CD8-positive, alpha-beta T cell (primary cell): ENCODE measurements at regions of chr3 and their contacts with region 1.

Region 1: DNA sequence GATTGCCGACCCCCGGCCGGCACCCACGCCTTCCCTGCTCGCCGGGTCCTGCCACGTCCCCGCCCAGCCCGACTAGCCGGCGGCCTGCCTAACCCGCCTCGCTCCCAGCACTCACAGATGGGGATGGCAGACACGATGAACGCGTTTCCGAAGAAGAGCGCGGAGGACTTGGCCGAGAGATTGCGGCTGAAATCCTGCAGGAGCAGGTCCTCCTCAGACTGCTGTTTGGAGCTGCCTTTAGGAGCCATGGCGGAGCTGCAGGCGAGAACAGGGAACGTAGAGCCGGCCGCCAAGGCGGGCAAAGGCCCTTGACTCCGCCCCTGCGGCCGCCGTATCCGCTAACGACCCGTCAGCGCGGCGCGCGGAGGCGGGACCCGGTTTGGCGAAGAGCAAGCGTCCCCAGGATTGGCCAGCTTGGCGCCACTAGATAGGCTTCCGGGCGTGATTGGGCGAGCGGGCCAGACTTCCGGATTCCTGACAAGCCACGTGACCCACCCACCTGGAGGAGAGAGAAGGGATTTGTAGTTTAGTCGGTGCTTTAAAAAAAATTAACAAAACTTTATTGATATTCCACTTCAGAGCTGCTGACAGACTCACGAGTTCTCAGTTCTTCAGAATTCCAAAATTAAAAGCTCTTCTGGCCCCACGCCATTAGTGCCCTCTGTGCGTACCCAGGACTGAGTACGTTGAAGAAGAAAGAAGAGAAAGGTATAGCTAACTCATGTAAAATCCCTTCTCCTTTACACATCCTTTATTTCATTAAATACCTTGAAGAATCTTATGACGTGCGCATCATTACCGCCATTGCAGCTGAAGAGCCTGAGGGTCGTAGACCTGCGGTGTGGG is at the start of gene SSR3:
- DNase-seq: peak; percentile 98 to 99 (median 98)
- ATAC-seq: peak; percentile 98
- H3K4me3 ChIP-seq: peak within 1 kb of the TSS; percentile 87 to 98
- H3K4me3 Mint-ChIP-seq: peak within 1 kb of the TSS; percentile 97
- H3K27ac ChIP-seq: peak within 1 kb of the TSS; percentile 76 to 89
- H3K27ac Mint-ChIP-seq: peak within 1 kb of the TSS; percentile 94
- H3K4me1 ChIP-seq: peaks cover 20% of the 10 kb centered on the region
- H3K4me1 Mint-ChIP-seq: peaks cover 49% of the 10 kb centered on the region
- H3K27me3 ChIP-seq: no peaks in the 10 kb centered on the region
- H3K27me3 Mint-ChIP-seq: no peaks in the 10 kb centered on the region
- CTCF ChIP-seq: peak; percentile 27
- total RNA-seq, gene SSR3: 81.4 to 82.5 TPM

Region 2: DNA sequence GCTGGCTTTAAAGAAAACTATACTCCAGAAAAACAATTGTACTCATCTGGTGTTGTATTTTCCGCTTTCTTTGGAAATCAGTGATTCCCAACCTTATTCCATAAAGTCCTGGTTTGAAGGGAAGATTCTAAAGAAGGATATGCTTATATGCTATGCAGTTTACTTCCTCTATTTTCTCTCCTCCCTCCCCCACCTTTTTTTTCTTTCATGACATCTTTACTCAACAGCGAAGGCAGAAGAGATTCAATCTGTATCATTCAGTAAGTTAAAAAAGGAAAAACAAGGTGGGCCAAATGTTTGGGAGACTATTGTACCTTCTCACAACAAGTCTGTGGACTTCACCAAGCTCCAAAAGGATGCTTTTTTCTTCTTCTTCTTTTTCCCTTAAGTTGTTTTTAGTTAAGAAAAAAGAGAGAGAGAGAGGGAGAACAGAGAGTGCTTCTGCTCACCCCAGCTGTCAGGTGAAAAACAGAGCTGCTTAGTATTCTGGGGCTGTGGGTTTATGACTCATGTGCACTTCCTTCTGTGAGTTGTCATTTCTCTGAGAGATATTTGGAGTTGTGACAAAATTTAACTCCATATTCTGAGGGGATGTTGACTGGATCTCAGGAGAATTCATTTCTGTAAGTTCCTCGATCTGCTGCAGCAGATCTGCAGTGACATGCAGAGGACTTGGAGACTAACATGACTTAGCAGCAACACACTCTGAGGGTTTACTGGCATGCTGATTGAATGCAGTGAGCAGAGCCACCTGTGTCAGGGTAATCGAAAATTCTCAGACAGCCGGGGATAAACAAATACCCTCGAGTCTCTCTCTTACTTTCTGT is 70.9 kb before region 1 on chr3:
- CTCF ChIA-PET with region 1: interaction called, 3 read pairs
- POLR2A ChIA-PET with region 1: interaction called, 6 read pairs
- intact Hi-C with region 1: loop called in 1 of 2 experiments (anchors 2 kb)
- DNase-seq: peak in 8 of 9 experiments; percentile 16 to 81 (median 58)
- ATAC-seq: peak; percentile 85
- H3K4me3 ChIP-seq: peak overlapping the region; percentile 21 to 36
- H3K4me3 Mint-ChIP-seq: peak overlapping the region; percentile 74
- H3K27ac ChIP-seq: peak overlapping the region; percentile 28 to 82
- H3K27ac Mint-ChIP-seq: peak overlapping the region; percentile 93
- H3K4me1 ChIP-seq: peaks cover 24% of the 10 kb centered on the region
- H3K4me1 Mint-ChIP-seq: peaks cover 42% of the 10 kb centered on the region
- H3K27me3 ChIP-seq: no peaks in the 10 kb centered on the region
- H3K27me3 Mint-ChIP-seq: no peaks in the 10 kb centered on the region
- CTCF ChIP-seq: no peak

Region 3: GRCh38 chr3:156576651-156577343 is 21.7 kb after region 1 on chr3:
- CTCF ChIA-PET with region 1: no interaction called
- POLR2A ChIA-PET with region 1: no interaction called
- intact Hi-C with region 1: no loop called
- DNase-seq: no peak
- ATAC-seq: no peak
- H3K4me3 ChIP-seq: no peak overlapping the region
- H3K4me3 Mint-ChIP-seq: no peak overlapping the region
- H3K27ac ChIP-seq: no peak overlapping the region
- H3K27ac Mint-ChIP-seq: no peak overlapping the region
- H3K4me1 ChIP-seq: no peaks in the 10 kb centered on the region
- H3K4me1 Mint-ChIP-seq: no peaks in the 10 kb centered on the region
- H3K27me3 ChIP-seq: no peaks in the 10 kb centered on the region
- H3K27me3 Mint-ChIP-seq: peaks cover 7% of the 10 kb centered on the region
- CTCF ChIP-seq: no peak

Region 4: DNA sequence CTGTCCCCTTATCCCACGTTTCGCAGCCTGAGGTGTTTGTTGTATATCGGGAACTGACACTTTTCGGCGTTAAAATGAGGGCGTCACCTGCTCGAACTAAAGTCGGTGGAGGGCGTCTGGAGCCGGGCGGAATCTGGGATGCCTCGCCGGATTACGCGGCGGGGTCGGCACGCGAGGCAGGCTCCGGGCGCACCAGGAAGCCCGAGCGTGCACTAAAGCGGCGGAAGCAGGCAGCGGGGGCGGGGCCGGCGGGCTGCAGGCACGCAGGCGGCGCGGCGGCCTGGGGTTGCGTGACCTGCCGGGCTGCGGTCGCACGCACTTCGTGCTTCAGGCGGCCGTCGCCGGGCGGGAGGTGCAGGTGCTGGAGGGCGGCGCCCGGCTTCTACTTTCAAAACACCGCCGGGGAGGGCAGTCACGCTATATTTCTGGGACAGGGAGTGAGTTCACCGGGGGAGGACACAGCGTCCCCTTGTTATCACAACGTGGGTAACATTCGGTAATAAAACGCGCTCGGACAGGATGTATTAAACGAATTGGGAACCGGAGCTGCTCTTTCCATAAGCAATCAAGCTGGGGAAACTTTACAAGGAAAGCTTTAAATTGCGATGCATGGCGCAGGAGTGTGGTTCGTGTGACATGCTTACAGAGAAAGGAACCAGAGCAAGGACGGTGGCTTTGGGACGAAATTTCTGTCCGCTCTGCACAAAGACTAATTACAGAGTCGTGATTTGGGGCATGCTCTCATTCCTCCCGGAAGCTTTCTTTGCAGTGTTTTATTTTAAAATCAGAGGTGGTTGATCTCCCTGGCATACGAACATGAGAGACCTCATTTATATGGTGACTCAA is 262.0 kb after region 1 on chr3:
- CTCF ChIA-PET with region 1: no interaction called
- POLR2A ChIA-PET with region 1: interaction called, 11 read pairs
- intact Hi-C with region 1: loop called (anchors 1 to 5 kb)
- DNase-seq: peak; percentile 53 to 95 (median 85)
- ATAC-seq: peak; percentile 80
- H3K4me3 ChIP-seq: peak overlapping the region; percentile 75 to 88
- H3K4me3 Mint-ChIP-seq: peak overlapping the region; percentile 95
- H3K27ac ChIP-seq: peak overlapping the region; percentile 73 to 78
- H3K27ac Mint-ChIP-seq: peak overlapping the region; percentile 95
- H3K4me1 ChIP-seq: peaks cover 18% of the 10 kb centered on the region
- H3K4me1 Mint-ChIP-seq: peaks cover 38% of the 10 kb centered on the region
- H3K27me3 ChIP-seq: no peaks in the 10 kb centered on the region
- H3K27me3 Mint-ChIP-seq: no peaks in the 10 kb centered on the region
- CTCF ChIP-seq: no peak

Region 5: DNA sequence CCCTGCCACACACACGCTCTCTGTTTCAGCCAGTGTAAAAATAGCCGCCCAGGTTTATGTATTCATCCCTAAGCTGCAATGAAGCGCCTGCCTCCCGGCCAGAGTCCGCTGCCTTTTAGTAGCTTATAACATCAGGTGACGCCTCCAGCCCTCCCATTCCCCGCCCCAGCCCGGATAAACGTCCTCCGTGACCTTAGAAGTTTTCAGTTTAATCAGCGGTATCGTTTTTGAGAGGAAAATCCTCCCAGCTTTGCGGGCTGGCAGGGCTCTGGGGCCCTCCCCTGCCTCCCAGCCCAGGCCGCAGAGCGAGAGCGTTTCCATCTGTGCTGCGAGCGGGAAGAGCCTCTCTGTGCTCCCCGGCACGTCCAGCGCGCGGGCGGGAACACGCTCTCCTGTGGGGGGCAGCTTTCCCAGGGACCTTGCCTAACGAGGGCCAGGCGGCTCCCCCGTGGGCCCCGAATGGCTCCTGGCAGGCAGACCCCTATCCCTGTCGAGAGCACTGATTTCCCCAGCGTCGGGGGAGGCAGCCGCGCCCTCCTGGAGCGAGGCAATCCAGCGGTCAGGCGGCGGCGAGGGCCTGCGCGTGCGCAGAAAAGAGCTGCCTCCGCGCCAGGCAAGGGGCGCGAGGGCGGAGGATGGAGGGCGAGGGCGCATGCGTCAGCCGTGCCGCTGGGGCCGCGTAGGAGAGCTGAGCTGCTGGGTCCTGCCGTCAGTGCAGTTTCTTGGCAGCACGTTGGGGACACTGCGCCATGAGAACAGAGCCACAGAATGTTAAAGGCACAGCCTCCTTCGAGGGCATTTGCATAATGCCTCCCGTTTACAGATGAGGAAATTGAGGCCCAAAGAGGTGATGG is 533.8 kb after region 1 on chr3:
- CTCF ChIA-PET with region 1: interaction called, 7 read pairs
- POLR2A ChIA-PET with region 1: interaction called, 7 read pairs
- intact Hi-C with region 1: loop called (anchors 1 to 2 kb)
- DNase-seq: peak; percentile 87 to 97 (median 93)
- ATAC-seq: peak; percentile 92
- H3K4me3 ChIP-seq: peak overlapping the region; percentile 96 to 98
- H3K4me3 Mint-ChIP-seq: peak overlapping the region; percentile 88
- H3K27ac ChIP-seq: peak overlapping the region; percentile 88 to 95
- H3K27ac Mint-ChIP-seq: peak overlapping the region; percentile 96
- H3K4me1 ChIP-seq: peaks cover 18% of the 10 kb centered on the region
- H3K4me1 Mint-ChIP-seq: peaks cover 26% of the 10 kb centered on the region
- H3K27me3 ChIP-seq: no peaks in the 10 kb centered on the region
- H3K27me3 Mint-ChIP-seq: no peaks in the 10 kb centered on the region
- CTCF ChIP-seq: no peak

Region 6: DNA sequence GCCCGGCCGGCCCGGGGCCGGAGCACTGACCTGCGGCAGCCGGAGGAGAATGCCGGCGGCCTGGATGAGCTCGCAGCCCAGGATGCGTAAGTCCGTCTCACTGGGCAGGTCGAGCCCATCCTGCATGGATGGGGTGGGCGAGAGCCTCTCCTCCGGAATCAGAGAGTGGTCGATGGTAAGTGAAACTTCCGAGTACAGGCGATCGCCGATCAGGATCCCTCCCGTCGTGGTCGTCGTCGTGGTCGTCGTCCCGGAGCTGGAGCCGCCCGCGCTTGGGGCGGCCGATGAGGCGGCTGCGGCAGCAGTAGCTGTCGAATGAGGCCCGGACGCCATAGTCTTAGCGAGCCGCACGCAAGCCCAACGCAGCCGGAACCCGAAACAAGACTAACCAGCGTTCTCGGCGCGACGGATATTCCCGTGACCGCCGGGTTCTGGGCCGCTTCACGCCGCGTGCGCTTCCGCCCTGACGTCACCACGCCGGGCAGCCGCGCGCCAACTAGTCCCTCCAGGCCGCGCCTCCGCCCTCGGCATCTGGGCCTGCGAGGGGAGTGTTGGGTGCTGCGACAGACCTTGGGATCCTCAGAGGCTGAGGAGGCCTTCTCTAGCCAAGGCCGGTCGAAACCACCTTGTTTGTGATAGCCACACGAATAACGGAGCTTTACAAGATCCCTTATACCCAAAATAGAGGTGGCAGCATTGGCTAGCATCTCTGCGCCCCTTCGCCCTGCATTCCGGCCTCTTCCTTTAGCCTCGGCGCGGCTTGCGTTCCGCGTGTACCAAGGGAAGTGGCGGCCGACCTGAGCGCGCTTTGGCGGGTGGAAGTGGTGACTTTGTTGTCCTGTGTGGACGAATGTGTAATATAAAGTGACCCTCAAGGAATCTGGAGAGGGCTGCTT is 604.9 kb after region 1 on chr3 and contains the start of gene CCNL1:
- CTCF ChIA-PET with region 1: no interaction called
- POLR2A ChIA-PET with region 1: interaction called, 12 read pairs
- intact Hi-C with region 1: loop called in 1 of 2 experiments (anchors 1 kb)
- DNase-seq: peak; percentile 92 to 99 (median 95)
- ATAC-seq: peak; percentile 70
- H3K4me3 ChIP-seq: peak within 1 kb of the TSS; percentile 79 to 84
- H3K4me3 Mint-ChIP-seq: peak within 1 kb of the TSS; percentile 96
- H3K27ac ChIP-seq: peak within 1 kb of the TSS; percentile 99 to 100
- H3K27ac Mint-ChIP-seq: peak within 1 kb of the TSS; percentile 100
- H3K4me1 ChIP-seq: peaks cover 50% of the 10 kb centered on the region
- H3K4me1 Mint-ChIP-seq: peaks cover 54% of the 10 kb centered on the region
- H3K27me3 ChIP-seq: no peaks in the 10 kb centered on the region
- H3K27me3 Mint-ChIP-seq: no peaks in the 10 kb centered on the region
- CTCF ChIP-seq: no peak
- total RNA-seq, gene CCNL1: 1,161 to 1,206 TPM

Region 7: GRCh38 chr3:157239082-157239704 is 684.1 kb after region 1 on chr3:
- CTCF ChIA-PET with region 1: no interaction called
- POLR2A ChIA-PET with region 1: no interaction called
- intact Hi-C with region 1: loop called in 1 of 2 experiments (anchors 1 kb)
- DNase-seq: peak; percentile 49 to 80 (median 72)
- ATAC-seq: peak; percentile 100
- H3K4me3 ChIP-seq: no peak overlapping the region
- H3K4me3 Mint-ChIP-seq: no peak overlapping the region
- H3K27ac ChIP-seq: no peak overlapping the region
- H3K27ac Mint-ChIP-seq: no peak overlapping the region
- H3K4me1 ChIP-seq: no peaks in the 10 kb centered on the region
- H3K4me1 Mint-ChIP-seq: peaks cover 4% of the 10 kb centered on the region
- H3K27me3 ChIP-seq: no peaks in the 10 kb centered on the region
- H3K27me3 Mint-ChIP-seq: no peaks in the 10 kb centered on the region
- CTCF ChIP-seq: peak; percentile 73